Keratinocyte (primary cell): ENCODE measurements at regions of chr1 and their contacts with region 1.

Region 1: DNA sequence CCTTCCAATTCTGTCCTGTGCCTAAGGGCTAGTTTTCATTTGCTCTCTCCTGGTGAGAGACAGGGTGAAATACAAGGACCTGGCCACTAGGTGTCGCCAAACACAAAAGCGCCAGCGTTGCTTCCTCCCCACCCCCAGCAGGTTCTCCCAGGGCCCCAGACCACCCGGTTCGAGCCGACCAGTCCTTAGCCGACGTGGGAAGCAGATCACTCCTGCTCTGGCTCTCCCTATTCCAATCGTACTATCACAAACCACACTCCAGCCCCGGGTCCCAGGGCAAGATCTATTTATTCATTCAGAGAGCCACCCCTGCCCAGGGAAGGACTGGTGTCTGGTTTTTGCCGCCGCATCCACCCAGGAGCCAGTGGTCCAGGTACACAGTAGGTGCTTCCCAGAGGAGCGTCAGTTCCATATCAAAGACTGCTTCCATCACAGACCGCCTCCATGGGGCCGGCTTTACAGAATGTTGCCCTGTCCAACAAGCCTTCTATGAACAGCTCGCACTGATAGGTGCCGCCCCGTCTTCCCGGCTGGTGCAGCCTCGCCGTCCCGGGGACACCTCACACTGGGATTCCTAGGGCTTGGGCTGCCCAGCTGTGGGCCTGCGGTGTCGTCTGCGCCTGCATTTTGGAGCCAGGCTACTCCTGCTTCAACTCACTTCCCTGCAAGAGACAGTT is 35.0 kb downstream of the CTNNBIP1 start:
- DNase-seq: no peak
- H3K4me3 ChIP-seq: peak overlapping the region in 1 of 3 experiments; percentile 25
- H3K27ac ChIP-seq: no peak overlapping the region
- H3K4me1 ChIP-seq: peaks cover 56% of the 10 kb centered on the region
- H3K27me3 ChIP-seq: no peaks in the 10 kb centered on the region
- CTCF ChIP-seq: peak; percentile 82 to 93 (median 90)

Region 2: GRCh38 chr1:9784508-9785133 is 90.5 kb before region 1 on chr1:
- dilution Hi-C with region 1: loop called (anchors 25 kb)
- DNase-seq: peak; percentile 63
- H3K4me3 ChIP-seq: no peak overlapping the region
- H3K27ac ChIP-seq: peak overlapping the region; percentile 30
- H3K4me1 ChIP-seq: peaks cover 30% of the 10 kb centered on the region
- H3K27me3 ChIP-seq: no peaks in the 10 kb centered on the region
- CTCF ChIP-seq: peak; percentile 66 to 83 (median 68)

Region 3: GRCh38 chr1:10628685-10629084 is 753.6 kb after region 1 on chr1:
- dilution Hi-C with region 1: no loop called
- DNase-seq: no peak
- H3K4me3 ChIP-seq: no peak overlapping the region
- H3K27ac ChIP-seq: no peak overlapping the region
- H3K4me1 ChIP-seq: no peaks in the 10 kb centered on the region
- H3K27me3 ChIP-seq: no peaks in the 10 kb centered on the region
- CTCF ChIP-seq: no peak